ENCODE measurements at regions of chr5 and their contacts with region 1.

Region 1: DNA sequence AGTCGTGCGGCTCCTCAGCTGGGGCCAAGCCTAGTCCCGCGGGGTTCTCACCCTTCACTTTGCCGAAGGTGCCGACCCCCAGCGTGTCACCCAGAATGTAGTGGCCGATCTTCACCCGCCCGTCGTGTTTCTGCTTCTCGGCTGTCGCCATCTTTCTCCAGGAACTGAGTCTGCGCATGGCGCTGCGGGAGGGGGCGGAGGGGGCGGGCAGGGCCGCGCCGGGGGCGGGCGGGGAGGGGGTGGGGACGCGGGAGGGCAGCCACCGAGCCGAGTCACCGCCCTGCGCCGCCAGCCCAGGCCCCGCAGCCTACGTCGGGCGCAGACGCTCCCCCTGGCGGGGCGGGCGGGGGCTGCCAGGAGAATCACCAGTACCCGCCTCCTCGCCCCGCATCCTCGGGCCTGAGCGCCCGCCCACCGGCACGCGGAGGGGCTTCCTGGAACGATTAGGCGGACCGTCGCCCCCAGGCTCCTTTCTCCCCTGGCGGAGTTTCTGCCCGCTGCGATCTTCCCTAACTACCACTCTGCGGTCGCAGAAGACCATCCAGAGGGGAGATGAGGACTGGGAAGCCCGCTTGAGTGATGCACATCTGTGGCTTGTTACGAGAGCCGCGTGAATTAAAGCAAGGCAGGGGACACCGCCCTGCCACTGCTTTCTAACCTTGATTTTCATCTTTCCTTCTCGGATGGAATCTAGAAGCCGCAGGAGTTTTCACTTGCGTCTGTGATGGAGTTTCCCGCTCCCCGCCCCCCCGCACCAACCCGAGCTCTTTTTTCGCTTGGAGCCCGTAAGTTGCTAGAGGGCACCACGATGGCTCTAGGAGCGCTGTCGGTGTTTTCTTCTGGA is at the start of gene PRKAA1:
- DNase-seq: peak; percentile 91
- H3K4me3 Mint-ChIP-seq: peak within 1 kb of the TSS; percentile 81
- H3K27ac Mint-ChIP-seq: peak within 1 kb of the TSS; percentile 82
- H3K4me1 Mint-ChIP-seq: peaks cover 42% of the 10 kb centered on the region
- H3K27me3 Mint-ChIP-seq: peaks cover 7% of the 10 kb centered on the region
- total RNA-seq, gene PRKAA1: 76.6 to 77.7 TPM

Region 2: GRCh38 chr5:40736103-40736875 is 61.9 kb before region 1 on chr5:
- CTCF ChIA-PET with region 1: no interaction called
- POLR2A ChIA-PET with region 1: no interaction called
- DNase-seq: no peak
- H3K4me3 Mint-ChIP-seq: no peak overlapping the region
- H3K27ac Mint-ChIP-seq: no peak overlapping the region
- H3K4me1 Mint-ChIP-seq: peaks cover 23% of the 10 kb centered on the region
- H3K27me3 Mint-ChIP-seq: no peaks in the 10 kb centered on the region

Region 3: DNA sequence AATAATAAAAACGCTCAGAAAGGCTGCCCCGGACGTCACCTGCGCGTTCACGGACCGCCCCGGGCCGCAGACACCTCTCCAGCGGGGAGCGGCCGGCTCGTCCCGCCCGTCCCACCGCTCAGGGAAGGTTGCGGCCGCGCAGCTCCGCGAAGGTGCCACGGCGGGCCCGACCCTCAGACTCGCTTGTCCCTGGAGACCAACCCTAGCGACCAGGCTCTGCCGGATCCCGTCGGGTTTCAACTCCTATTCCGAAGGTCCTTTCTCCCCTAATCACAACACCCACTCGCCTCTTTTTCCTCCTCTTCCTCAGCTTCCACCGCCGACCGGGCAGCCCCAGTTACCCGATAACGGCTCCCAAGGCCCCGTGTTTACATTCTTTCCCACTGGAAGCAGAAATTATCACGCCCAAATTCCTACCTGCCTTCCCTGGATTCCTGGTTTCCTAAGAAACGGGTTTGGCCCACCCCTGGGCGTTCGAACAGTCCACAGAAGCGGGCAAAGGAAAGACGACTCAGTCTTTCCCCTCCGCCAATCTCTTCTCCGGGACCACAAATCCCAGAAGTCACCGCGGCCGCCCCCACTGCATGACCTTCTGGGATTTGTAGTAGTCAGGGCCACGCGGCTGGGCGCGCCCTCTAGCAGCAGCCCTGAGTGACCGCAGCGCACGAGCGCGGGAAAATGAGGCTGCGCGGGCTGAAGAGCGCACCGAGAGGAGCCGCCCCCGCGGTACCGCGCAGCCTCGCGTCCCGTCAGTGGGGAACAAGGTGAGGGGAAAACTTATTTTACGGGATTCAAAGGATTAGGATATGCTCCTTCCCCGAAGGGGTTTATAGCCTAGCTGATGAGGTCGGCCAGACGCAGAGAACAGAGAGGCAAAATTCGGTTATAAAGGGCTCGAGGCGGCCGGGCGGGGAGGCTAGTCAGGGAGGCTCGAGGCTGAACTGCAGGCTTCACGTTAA is 42.5 kb before region 1 on chr5 and contains the start of gene TTC33:
- CTCF ChIA-PET with region 1: interaction called, 5 read pairs
- POLR2A ChIA-PET with region 1: interaction called, 10 read pairs
- DNase-seq: peak; percentile 97
- H3K4me3 Mint-ChIP-seq: no peak within 1 kb of the TSS
- H3K27ac Mint-ChIP-seq: no peak within 1 kb of the TSS
- H3K4me1 Mint-ChIP-seq: peaks cover 21% of the 10 kb centered on the region
- H3K27me3 Mint-ChIP-seq: no peaks in the 10 kb centered on the region
- total RNA-seq, gene TTC33: 19.6 to 19.9 TPM

Region 4: GRCh38 chr5:40853632-40854192 is 55.5 kb after region 1 on chr5:
- CTCF ChIA-PET with region 1: no interaction called
- POLR2A ChIA-PET with region 1: no interaction called
- DNase-seq: no peak
- H3K4me3 Mint-ChIP-seq: no peak overlapping the region
- H3K27ac Mint-ChIP-seq: no peak overlapping the region
- H3K4me1 Mint-ChIP-seq: no peaks in the 10 kb centered on the region
- H3K27me3 Mint-ChIP-seq: no peaks in the 10 kb centered on the region